ENCODE measurements at regions of chr4 and their contacts with region 1.

Region 1: DNA sequence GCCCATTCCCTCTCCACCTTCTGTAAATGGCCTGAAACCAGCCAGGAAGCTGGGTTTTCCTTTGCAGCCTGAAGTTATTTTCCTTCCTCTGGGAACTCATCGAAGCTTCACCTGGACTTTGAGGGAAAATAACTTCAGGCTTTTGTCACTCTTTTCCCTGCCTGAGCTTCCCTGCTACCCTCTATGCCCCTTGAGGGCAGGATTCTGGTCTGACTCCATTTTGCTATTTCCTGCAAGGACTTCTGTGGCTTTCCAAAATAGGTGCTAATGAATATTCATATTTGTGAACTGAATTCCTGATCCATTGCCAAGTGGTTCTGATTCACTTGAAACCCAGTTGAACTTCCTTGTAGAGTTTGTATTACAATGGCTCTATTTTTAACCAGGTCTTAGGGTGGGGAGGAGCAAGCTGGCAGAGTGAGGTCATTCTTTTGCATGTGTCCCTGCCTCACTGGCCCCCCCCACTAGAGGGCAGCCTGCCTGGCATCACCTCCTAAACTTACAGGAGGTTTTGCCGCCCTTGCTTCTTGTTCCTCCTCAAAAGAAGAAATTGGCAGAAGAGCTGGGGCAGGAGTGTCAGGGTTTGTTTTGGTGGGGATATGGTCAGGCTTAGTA is 10.4 kb downstream of the PTTG2 start:
- DNase-seq: peak; percentile 47
- ATAC-seq: peak; percentile 95
- H3K4me3 Mint-ChIP-seq: no peak overlapping the region
- H3K27ac Mint-ChIP-seq: no peak overlapping the region
- H3K4me1 Mint-ChIP-seq: peaks cover 41% of the 10 kb centered on the region
- H3K27me3 Mint-ChIP-seq: no peaks in the 10 kb centered on the region
- CTCF ChIP-seq: no peak

Region 2: DNA sequence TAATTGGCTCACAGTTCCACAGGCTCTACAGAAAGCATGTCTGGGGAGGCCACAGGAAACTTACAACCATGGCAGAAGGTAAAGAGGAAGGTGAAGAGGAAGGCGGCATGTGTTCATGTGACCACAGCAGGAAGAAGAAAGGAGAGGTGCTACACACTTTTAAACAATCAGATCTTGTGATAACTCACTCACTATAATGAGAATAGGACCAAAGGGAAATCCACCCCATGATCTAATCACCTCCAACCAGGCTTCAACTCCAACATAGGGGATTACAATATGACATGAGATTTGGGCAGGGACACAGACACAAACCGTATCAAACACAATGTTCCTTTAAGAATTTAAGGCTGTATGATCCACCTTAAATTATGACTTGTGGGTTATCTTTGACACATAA is 154.6 kb before region 1 on chr4:
- CTCF ChIA-PET with region 1: no interaction called
- POLR2A ChIA-PET with region 1: no interaction called
- intact Hi-C with region 1: no loop called
- DNase-seq: no peak
- ATAC-seq: peak; percentile 34
- H3K4me3 Mint-ChIP-seq: no peak overlapping the region
- H3K27ac Mint-ChIP-seq: peak overlapping the region; percentile 75
- H3K4me1 Mint-ChIP-seq: peaks cover 12% of the 10 kb centered on the region
- H3K27me3 Mint-ChIP-seq: no peaks in the 10 kb centered on the region
- CTCF ChIP-seq: no peak

Region 3: DNA sequence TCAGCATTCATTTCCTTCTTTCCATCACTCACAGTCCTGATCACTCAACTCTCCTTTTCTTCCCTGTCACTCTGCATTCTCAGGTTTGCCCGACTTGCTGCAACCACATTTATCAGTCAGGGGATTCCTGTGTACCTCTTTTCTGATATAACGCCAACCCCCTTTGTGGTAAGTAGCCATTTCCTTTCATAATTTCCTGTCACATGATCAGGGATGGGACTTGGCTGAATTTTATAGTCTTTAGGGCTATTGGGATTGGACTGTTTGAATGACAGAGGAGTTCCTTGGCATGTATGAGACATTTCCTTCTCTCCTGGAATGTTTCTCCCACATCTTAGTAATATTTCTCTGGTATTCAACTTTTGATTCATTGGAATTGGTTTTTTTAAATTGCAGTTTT is 133.1 kb before region 1 on chr4:
- CTCF ChIA-PET with region 1: no interaction called
- POLR2A ChIA-PET with region 1: no interaction called
- intact Hi-C with region 1: no loop called
- DNase-seq: no peak
- ATAC-seq: no peak
- H3K4me3 Mint-ChIP-seq: no peak overlapping the region
- H3K27ac Mint-ChIP-seq: no peak overlapping the region
- H3K4me1 Mint-ChIP-seq: peaks cover 11% of the 10 kb centered on the region
- H3K27me3 Mint-ChIP-seq: no peaks in the 10 kb centered on the region
- CTCF ChIP-seq: no peak

Region 4: GRCh38 chr4:37858872-37859271 is 111.7 kb before region 1 on chr4:
- CTCF ChIA-PET with region 1: no interaction called
- POLR2A ChIA-PET with region 1: no interaction called
- intact Hi-C with region 1: no loop called
- DNase-seq: no peak
- ATAC-seq: no peak
- H3K4me3 Mint-ChIP-seq: no peak overlapping the region
- H3K27ac Mint-ChIP-seq: no peak overlapping the region
- H3K4me1 Mint-ChIP-seq: no peaks in the 10 kb centered on the region
- H3K27me3 Mint-ChIP-seq: no peaks in the 10 kb centered on the region
- CTCF ChIP-seq: no peak

Region 5: DNA sequence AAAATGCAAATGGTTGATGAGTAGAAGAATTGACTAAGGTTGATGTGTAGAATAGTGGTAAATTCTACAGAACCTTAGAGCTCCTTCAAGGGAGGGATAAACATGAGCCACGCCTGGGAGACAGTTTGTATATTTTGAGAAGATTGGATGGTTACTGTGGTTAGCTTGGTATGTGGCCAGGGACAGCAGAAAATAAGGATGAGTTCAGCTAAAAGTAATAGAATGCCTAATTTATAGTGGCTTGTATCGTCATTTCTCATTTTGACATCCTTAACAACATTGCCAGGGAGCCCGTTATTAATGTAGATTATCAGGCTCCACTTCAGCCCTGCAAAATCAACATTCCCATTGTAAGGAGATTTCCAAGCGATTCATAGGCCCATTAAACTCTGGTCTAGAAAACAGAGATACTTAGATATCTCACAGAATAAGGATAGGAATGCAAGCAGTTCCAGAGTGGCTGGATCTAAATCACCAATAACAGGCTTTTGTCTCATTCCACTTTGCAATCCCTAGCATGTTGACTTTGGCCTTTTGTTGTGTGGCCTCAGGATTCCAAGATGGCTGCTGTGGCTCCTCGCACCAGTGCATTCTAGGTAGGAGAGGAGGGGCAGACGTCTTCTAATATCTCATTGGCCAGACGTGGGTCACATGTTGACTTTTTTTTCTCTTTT is 16.8 kb before region 1 on chr4:
- CTCF ChIA-PET with region 1: no interaction called
- POLR2A ChIA-PET with region 1: no interaction called
- intact Hi-C with region 1: loop called (anchors 2 kb)
- DNase-seq: no peak
- ATAC-seq: no peak
- H3K4me3 Mint-ChIP-seq: no peak overlapping the region
- H3K27ac Mint-ChIP-seq: no peak overlapping the region
- H3K4me1 Mint-ChIP-seq: peaks cover 14% of the 10 kb centered on the region
- H3K27me3 Mint-ChIP-seq: no peaks in the 10 kb centered on the region
- CTCF ChIP-seq: no peak

Region 6: GRCh38 chr4:37988670-37989069 is 18.1 kb after region 1 on chr4:
- CTCF ChIA-PET with region 1: no interaction called
- POLR2A ChIA-PET with region 1: no interaction called
- intact Hi-C with region 1: no loop called
- DNase-seq: no peak
- ATAC-seq: no peak
- H3K4me3 Mint-ChIP-seq: no peak overlapping the region
- H3K27ac Mint-ChIP-seq: peak overlapping the region; percentile 77
- H3K4me1 Mint-ChIP-seq: peaks cover 71% of the 10 kb centered on the region
- H3K27me3 Mint-ChIP-seq: no peaks in the 10 kb centered on the region
- CTCF ChIP-seq: no peak

Measured in activated B cell treated with CpG ODN at 0.5 μM for 24 hours (primary cell).